Body of pancreas (tissue), 4 donors: ENCODE measurements at regions of chr5 and their contacts with region 1.

Region 1: GRCh38 chr5:134533115-134533815 is 7.8 kb downstream of the JADE2 start:
- DNase-seq: peak in 3 of 4 donors; percentile 23 to 33 (median 30)
- ATAC-seq: no peak
- H3K4me3 ChIP-seq: no peak overlapping the region
- H3K27ac ChIP-seq: peak overlapping the region in 1 of 4 donors; percentile 4
- H3K4me1 ChIP-seq: peaks cover 63% of the 10 kb centered on the region
- H3K27me3 ChIP-seq: no peaks in the 10 kb centered on the region
- CTCF ChIP-seq: no peak
- POLR2A ChIP-seq: no peak

Region 2: DNA sequence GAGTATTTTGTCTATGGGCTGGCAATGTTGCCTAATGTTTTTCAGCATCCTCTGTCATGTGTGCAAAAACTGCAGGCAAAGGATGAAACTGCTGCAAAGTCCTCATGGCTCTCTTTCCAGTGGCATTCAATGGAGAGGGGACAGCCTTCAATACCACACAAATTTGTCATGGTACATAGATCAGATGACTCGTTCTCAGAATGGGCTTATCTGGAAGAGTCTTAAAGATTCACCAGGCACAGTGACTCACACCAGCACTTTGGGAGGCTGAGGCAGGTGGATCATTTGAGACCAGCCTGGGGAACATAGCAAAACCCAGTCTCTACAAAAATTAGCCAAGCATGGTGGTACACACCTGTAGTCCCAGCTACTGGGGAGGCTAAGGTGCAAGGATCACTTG is 126.9 kb before region 1 on chr5:
- intact Hi-C with region 1: loop called (anchors 5 kb)
- DNase-seq: no peak
- ATAC-seq: no peak
- H3K4me3 ChIP-seq: no peak overlapping the region
- H3K27ac ChIP-seq: no peak overlapping the region
- H3K4me1 ChIP-seq: peaks cover 34% of the 10 kb centered on the region
- H3K27me3 ChIP-seq: no peaks in the 10 kb centered on the region
- CTCF ChIP-seq: no peak
- POLR2A ChIP-seq: no peak